AG04450 (cell line): ENCODE measurements at regions of chr21 and their contacts with region 1.

Region 1: DNA sequence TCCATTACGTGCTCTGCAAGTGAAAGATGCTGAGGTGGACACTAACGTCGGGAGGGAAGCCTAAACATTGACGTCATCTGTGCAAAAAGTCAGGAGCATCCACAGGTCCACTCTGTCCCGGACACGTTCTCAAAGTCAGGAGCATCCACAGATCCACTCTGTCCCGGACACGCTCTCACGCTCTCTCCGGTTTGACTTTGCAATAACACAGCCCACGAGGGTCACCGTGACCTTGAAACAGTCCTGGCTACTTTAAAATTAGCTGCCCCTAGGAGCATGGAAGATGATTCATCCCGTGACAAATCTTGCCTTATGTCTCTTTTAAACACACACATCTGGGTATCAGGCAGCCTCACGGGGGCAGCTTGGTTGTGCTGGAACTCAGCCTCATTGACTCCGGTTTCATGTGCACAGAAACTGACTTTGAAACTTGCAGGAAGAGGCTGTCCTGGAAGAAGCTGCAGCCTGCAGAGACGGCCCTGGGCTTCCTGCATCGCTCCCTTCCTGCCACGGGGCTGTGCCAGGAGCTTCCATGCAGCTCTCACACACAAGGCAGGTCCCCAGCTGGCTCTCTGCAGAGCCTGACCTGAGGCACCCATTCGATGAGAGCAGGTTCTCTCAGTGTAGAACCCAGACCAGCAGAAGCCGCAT is 18.1 kb upstream of the COL18A1 start:
- DNase-seq: peak; percentile 87
- H3K4me3 ChIP-seq: peak overlapping the region; percentile 17; the same call in 1 of the 2 replicates
- H3K27ac ChIP-seq: peak overlapping the region; percentile 80
- H3K27me3 ChIP-seq: no peaks in the 10 kb centered on the region
- CTCF ChIP-seq: peak; percentile 45

Region 2: GRCh38 chr21:45363921-45364467 is 22.9 kb before region 1 on chr21:
- CTCF ChIA-PET with region 1: no interaction called
- POLR2A ChIA-PET with region 1: interaction called, 12 read pairs
- DNase-seq: peak; percentile 96
- H3K4me3 ChIP-seq: peak overlapping the region; percentile 35; the same call in 1 of the 2 replicates
- H3K27ac ChIP-seq: peak overlapping the region; percentile 100
- H3K27me3 ChIP-seq: no peaks in the 10 kb centered on the region
- CTCF ChIP-seq: no peak